ENCODE measurements at regions of chr11 and their contacts with region 1.

Region 1: DNA sequence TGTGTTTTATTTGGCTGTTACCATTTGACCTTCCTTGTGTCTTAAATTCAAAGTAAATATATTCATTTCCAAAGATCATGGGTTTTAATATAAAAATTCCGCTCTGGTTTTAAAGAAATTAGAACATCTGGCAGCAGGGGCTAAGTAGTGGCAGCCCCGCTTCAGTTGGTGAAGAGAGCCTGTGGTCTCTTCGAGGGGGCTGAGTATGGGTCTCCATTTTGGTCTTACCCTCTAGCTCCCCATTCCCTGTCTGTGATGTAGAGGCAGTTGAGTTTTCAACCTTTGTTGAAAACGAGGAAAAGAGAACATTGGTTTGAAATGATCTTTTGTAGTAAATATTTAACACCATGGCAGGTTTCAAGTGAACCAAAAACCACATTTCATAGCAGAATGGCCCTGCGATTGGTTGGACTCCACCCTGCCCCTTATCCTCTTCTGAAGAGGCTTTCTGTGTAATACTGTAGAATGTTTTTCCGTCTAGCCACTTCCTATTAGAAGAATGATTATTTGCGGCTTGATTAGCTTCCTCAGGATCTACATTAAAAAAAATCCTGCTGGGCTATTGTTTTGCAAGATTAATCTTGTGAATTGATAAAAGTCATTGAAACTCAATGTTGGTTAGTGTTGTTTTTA is 17.7 kb downstream of the APLP2 start:
- DNase-seq: peak in 1 of 3 donors; percentile 31
- H3K4me3 ChIP-seq: peak overlapping the region in 1 of 3 experiments; percentile 59
- H3K4me3 Mint-ChIP-seq: peak overlapping the region; percentile 51 to 74
- H3K27ac ChIP-seq: peak overlapping the region; percentile 46 to 81
- H3K27ac Mint-ChIP-seq: peak overlapping the region; percentile 81 to 92 (median 87)
- H3K4me1 ChIP-seq: peaks cover 51 to 73% of the 10 kb centered on the region in 2 donors
- H3K4me1 Mint-ChIP-seq: peaks cover 64% of the 10 kb centered on the region
- H3K27me3 ChIP-seq: no peaks in the 10 kb centered on the region
- H3K27me3 Mint-ChIP-seq: peaks cover 0 to 1% (median 0%) of the 10 kb centered on the region in 3 donors
- CTCF ChIP-seq: no peak

Region 2: GRCh38 chr11:130124096-130124495 is 36.7 kb after region 1 on chr11:
- intact Hi-C with region 1: loop called in 1 of 2 experiments (anchors 5 kb)
- DNase-seq: peak; percentile 95 to 99 (median 98)
- H3K4me3 ChIP-seq: peak overlapping the region in 1 of 3 experiments; percentile 60
- H3K4me3 Mint-ChIP-seq: peak overlapping the region; percentile 62 to 72
- H3K27ac ChIP-seq: peak overlapping the region; percentile 91 to 96
- H3K27ac Mint-ChIP-seq: peak overlapping the region; percentile 98 to 100 (median 100)
- H3K4me1 ChIP-seq: peaks cover 77 to 85% of the 10 kb centered on the region in 2 donors
- H3K4me1 Mint-ChIP-seq: peaks cover 80% of the 10 kb centered on the region
- H3K27me3 ChIP-seq: no peaks in the 10 kb centered on the region
- H3K27me3 Mint-ChIP-seq: peaks cover 0 to 4% (median 2%) of the 10 kb centered on the region in 3 donors
- CTCF ChIP-seq: no peak

Measured in CD14-positive monocyte (primary cell).